PC-9 (cell line): ENCODE measurements at regions of chr9 and their contacts with region 1.

Region 1: GRCh38 chr9:112112941-112113681 is 62.0 kb downstream of the SUSD1 start:
- DNase-seq: peak; percentile 73 to 87
- H3K4me3 ChIP-seq: no peak overlapping the region
- H3K27ac ChIP-seq: peak overlapping the region; percentile 95
- H3K4me1 ChIP-seq: peaks cover 62% of the 10 kb centered on the region
- H3K27me3 ChIP-seq: no peaks in the 10 kb centered on the region
- CTCF ChIP-seq: peak; percentile 85

Region 2: DNA sequence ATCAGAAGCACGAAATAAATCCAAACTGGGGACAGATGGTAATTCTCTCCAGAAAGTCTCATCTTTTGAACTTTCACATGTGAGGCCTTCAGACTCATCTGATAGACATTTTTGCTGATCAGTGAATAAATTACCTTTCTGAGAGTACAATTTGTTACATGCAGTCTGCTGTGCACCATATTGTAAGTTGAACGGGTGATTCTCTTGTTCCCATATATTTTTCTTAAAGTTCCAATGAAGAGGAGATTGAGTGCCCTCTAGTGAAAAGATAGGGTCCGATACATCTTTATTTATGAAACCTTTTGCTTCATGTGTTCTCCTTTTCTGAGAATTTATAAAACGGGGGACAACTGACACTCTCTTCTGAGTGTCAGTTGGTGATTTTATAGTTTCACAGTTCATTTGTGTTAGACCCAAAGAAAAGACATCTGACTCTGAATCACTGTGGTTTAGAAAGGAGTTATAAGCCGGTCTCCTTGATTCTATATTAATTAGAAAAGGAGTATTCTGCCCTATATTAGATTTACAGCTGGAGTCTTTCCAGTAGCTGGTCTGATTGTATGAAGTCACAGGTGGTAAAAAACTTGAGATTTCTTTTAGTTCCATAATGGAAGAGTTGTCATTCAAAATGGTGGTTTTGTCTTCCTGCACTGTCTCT is 421.3 kb before region 1 on chr9:
- CTCF ChIA-PET with region 1: no interaction called
- POLR2A ChIA-PET with region 1: no interaction called
- intact Hi-C with region 1: no loop called
- DNase-seq: peak in 1 of 2 experiments; percentile 45
- H3K4me3 ChIP-seq: no peak overlapping the region
- H3K27ac ChIP-seq: no peak overlapping the region
- H3K4me1 ChIP-seq: no peaks in the 10 kb centered on the region
- H3K27me3 ChIP-seq: no peaks in the 10 kb centered on the region
- CTCF ChIP-seq: peak; percentile 63

Region 3: GRCh38 chr9:112086627-112087026 is 26.5 kb before region 1 on chr9:
- CTCF ChIA-PET with region 1: interaction called, 13 read pairs
- POLR2A ChIA-PET with region 1: no interaction called
- intact Hi-C with region 1: no loop called
- DNase-seq: peak in 1 of 2 experiments; percentile 39
- H3K4me3 ChIP-seq: no peak overlapping the region
- H3K27ac ChIP-seq: no peak overlapping the region
- H3K4me1 ChIP-seq: 0 out of 2 replicates have a peak, but pooled peaks cover 4% of the 10 kb centered on the region
- H3K27me3 ChIP-seq: no peaks in the 10 kb centered on the region
- CTCF ChIP-seq: peak; percentile 73

Region 4: DNA sequence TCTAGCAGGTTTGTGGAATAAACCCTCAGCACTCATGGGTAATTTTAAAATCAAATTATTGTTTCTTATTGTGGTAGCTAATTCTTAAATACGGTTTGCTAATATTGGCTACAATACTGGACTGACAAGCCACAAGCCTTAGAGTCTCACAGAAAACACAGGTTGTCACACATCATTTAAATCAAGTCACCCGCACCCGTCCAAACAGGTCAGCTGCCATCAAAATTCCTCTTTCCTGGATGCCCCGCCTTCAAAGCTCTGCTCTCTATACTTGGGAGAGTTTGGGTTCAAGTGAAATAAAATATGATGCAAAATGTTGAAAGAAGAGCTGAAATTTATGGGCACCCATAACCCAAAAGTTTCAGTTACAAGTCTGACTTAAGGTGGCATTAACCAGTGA is 74.3 kb after region 1 on chr9:
- CTCF ChIA-PET with region 1: no interaction called
- POLR2A ChIA-PET with region 1: interaction called, 13 read pairs
- intact Hi-C with region 1: no loop called
- DNase-seq: no peak
- H3K4me3 ChIP-seq: no peak overlapping the region
- H3K27ac ChIP-seq: no peak overlapping the region
- H3K4me1 ChIP-seq: no peaks in the 10 kb centered on the region
- H3K27me3 ChIP-seq: no peaks in the 10 kb centered on the region
- CTCF ChIP-seq: no peak

Region 5: DNA sequence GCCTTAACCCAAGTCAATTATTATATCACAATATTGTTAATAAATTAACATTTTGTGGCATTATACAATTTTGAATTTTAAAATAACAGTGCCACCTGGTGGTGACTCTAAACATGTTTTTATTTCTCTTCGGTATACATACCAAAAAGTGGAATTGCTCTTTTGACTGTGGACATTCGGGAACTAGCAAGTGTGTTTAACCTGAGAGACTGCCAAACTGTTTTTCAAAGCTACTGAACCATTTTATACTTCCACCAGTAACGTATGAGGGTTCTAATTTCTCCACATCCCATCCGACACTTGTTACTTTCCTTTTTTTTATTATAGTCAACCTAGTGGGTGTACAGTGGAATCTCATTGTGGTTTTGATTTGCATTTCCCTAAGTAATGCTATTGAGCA is 248.5 kb after region 1 on chr9:
- CTCF ChIA-PET with region 1: interaction called, 9 read pairs
- POLR2A ChIA-PET with region 1: interaction called, 6 read pairs
- intact Hi-C with region 1: loop called (anchors 1 kb)
- DNase-seq: peak in 1 of 2 experiments; percentile 53
- H3K4me3 ChIP-seq: no peak overlapping the region
- H3K27ac ChIP-seq: no peak overlapping the region
- H3K4me1 ChIP-seq: peaks cover 11% of the 10 kb centered on the region; the same call in 1 of the 2 replicates
- H3K27me3 ChIP-seq: no peaks in the 10 kb centered on the region
- CTCF ChIP-seq: peak; percentile 78

Region 6: GRCh38 chr9:112486221-112487007 is 373.3 kb after region 1 on chr9 and contains the start of gene KIAA1958:
- CTCF ChIA-PET with region 1: no interaction called
- POLR2A ChIA-PET with region 1: no interaction called
- intact Hi-C with region 1: loop called (anchors 5 kb)
- DNase-seq: peak; percentile 71 to 89
- H3K4me3 ChIP-seq: peak within 1 kb of the TSS; percentile 81
- H3K27ac ChIP-seq: 0 out of 2 replicates have a peak within 1 kb of the TSS, but pooled peaks have one; percentile 17
- H3K4me1 ChIP-seq: peaks cover 21% of the 10 kb centered on the region
- H3K27me3 ChIP-seq: no peaks in the 10 kb centered on the region
- CTCF ChIP-seq: no peak
- total RNA-seq, gene KIAA1958: 19.5 and 19.8 TPM in 2 replicates

Region 7: DNA sequence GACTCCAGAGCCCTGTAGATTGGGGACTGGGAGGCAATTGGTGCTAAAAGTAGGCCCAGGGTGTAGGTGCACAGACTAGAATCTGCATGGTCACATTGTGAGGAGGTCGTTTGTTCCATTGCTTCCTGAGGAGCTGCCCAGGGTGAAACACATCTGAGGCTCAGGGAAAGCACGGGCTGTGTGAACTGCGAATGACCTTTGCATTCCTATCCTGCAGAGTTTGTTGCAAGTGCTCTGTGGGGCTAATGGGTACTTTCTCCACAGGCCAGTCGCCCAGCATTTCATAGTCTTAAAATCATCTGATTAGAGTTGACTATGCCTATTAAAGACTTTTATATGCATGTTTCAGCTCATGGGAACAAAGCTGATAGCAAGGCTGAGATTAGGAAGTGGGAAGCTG is 792.0 kb after region 1 on chr9:
- CTCF ChIA-PET with region 1: interaction called, 3 read pairs
- POLR2A ChIA-PET with region 1: no interaction called
- intact Hi-C with region 1: loop called (anchors 10 kb)
- DNase-seq: no peak
- H3K4me3 ChIP-seq: no peak overlapping the region
- H3K27ac ChIP-seq: no peak overlapping the region
- H3K4me1 ChIP-seq: no peaks in the 10 kb centered on the region
- H3K27me3 ChIP-seq: no peaks in the 10 kb centered on the region
- CTCF ChIP-seq: no peak